A673 (cell line): ENCODE measurements at regions of chrX and their contacts with region 1.

Region 1: GRCh38 chrX:19682712-19683331 is 167.5 kb upstream of the MAP3K15 start:
- DNase-seq: peak; percentile 67
- H3K4me3 ChIP-seq: no peak overlapping the region
- H3K27ac ChIP-seq: no peak overlapping the region
- H3K4me1 ChIP-seq: no peaks in the 10 kb centered on the region
- H3K27me3 ChIP-seq: no peaks in the 10 kb centered on the region
- CTCF ChIP-seq: no peak

Region 2: GRCh38 chrX:20347481-20347880 is 664.7 kb after region 1 on chrX:
- CTCF ChIA-PET with region 1: no interaction called
- POLR2A ChIA-PET with region 1: interaction called, 14 read pairs
- intact Hi-C with region 1: no loop called
- DNase-seq: no peak
- H3K4me3 ChIP-seq: no peak overlapping the region
- H3K27ac ChIP-seq: no peak overlapping the region
- H3K4me1 ChIP-seq: no peaks in the 10 kb centered on the region
- H3K27me3 ChIP-seq: peaks cover 6% of the 10 kb centered on the region
- CTCF ChIP-seq: no peak